ENCODE measurements at regions of chr1 and their contacts with region 1.

Region 1: DNA sequence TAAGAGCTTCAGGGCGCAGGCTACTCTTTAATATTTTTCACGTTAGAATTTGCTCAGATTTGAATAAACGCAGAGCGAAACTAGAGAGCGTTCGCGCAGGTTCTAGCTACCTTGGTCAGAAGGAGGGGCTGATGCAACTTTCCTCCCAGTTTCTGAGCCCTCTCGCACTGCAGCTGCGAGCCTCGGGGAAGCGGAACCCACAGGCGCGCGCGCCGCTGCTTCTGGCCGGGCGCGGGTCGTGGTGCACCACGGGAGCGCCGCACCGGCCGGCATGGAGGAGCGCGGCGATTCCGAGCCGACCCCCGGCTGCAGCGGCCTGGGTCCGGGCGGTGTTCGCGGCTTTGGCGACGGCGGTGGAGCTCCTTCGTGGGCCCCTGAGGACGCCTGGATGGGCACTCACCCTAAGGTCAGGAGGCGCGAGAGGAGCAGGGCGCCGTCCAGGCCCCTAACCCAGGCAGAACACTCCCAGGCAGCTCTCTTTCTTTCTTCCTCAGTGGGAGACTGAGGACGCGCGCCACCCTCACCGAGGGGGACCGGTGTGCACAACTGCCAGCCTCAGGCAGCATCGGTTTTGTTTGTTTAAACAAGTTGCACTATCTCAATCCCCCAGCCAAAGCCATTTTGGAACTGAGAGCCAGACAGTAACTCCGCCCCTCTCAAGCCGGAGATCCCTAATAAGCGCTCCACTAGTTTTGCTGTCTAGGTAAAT is at the start of gene TSEN15:
- H3K4me3 Mint-ChIP-seq: peak within 1 kb of the TSS; percentile 98
- H3K27ac Mint-ChIP-seq: peak within 1 kb of the TSS; percentile 90
- H3K4me1 Mint-ChIP-seq: peaks cover 21% of the 10 kb centered on the region
- H3K27me3 Mint-ChIP-seq: peaks cover 31% of the 10 kb centered on the region

Region 2: GRCh38 chr1:183932412-183932811 is 119.2 kb before region 1 on chr1:
- intact Hi-C with region 1: loop called (anchors 5 kb)
- H3K4me3 Mint-ChIP-seq: no peak overlapping the region
- H3K27ac Mint-ChIP-seq: peak overlapping the region; percentile 61
- H3K4me1 Mint-ChIP-seq: peaks cover 48% of the 10 kb centered on the region
- H3K27me3 Mint-ChIP-seq: no peaks in the 10 kb centered on the region